ENCODE measurements at regions of chr10 and their contacts with region 1.

Region 1: DNA sequence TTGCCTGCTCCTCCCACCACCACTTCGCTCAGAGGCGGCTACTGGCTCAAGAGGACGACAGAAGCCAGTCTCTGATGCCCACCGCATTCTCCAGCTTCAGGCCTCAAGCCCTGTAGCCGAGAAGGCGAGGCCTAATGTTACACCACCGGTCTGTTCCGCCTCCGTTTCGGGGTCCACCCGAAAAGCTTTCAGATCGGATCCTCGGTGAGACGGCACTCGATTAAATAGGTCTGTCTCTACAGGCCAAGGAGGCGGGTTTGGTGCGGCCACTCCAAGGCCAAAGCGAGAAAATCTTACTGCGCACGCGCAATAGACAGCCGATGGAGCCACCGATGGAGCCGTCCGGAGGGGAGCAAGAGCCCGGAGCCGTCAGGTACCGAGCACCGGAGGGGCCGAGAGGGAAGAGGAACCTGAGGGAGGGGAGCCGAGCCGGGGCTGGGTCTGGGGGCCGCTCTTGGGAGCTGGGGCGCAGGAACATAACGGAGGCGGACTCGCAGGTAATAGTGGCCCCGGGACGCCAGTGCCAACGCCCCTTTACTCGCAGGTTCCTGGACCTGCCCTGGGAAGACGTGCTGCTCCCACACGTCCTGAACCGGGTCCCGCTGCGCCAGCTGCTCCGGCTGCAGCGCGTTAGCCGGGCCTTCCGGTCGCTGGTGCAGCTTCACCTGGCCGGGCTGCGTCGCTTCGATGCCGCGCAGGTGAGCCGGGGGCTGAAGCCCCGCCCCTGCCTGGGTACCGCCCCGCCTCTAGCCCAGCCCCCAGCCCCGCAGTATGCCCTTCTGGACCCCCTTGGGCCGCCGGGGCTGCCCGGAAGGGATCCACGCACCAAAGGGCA is at the start of gene FBXL15:
- DNase-seq: peak; percentile 96
- H3K4me3 Mint-ChIP-seq: peak within 1 kb of the TSS; percentile 99
- H3K27ac Mint-ChIP-seq: peak within 1 kb of the TSS; percentile 98
- H3K4me1 Mint-ChIP-seq: peaks cover 34% of the 10 kb centered on the region
- H3K27me3 Mint-ChIP-seq: peaks cover 9% of the 10 kb centered on the region
- total RNA-seq, gene FBXL15: 14.5 and 18.5 TPM in 2 replicates

Region 2: DNA sequence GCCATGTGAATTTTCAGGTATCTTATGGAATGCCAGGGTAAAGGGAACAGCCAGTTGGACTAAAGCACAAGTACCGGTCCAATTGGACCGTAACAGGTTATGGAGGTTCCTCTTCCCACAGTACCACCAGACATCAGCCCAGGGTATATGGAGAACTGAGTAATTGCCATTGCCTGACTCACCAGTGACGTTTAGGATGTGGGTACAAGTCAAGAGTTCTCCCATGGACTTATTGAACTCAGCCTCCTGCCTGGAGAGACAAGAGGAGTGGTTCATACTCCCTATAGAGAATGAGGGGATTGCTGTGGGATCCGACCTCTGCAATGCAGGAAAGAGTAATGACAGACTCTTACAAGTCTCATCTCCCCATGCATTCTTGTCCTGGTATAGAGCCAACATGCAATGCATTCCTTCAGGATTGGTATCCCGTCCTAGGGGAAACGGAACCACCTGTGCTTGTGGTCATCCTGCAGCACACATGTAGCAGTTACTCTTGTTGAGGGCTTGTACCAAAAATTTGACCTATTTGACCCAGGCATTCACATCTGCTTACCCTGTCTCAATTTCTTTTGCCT is 225.6 kb before region 1 on chr10:
- intact Hi-C with region 1: no loop called
- DNase-seq: no peak
- H3K4me3 Mint-ChIP-seq: no peak overlapping the region
- H3K27ac Mint-ChIP-seq: no peak overlapping the region
- H3K4me1 Mint-ChIP-seq: peaks cover 8% of the 10 kb centered on the region
- H3K27me3 Mint-ChIP-seq: no peaks in the 10 kb centered on the region

Region 3: GRCh38 chr10:102399217-102400089 is 21.6 kb before region 1 on chr10:
- intact Hi-C with region 1: loop called (anchors 1 kb)
- DNase-seq: peak; percentile 86
- H3K4me3 Mint-ChIP-seq: peak overlapping the region; percentile 90
- H3K27ac Mint-ChIP-seq: peak overlapping the region; percentile 63
- H3K4me1 Mint-ChIP-seq: peaks cover 42% of the 10 kb centered on the region
- H3K27me3 Mint-ChIP-seq: no peaks in the 10 kb centered on the region

Region 4: GRCh38 chr10:102432162-102432950 is 11.3 kb after region 1 on chr10 and contains the start of gene CUEDC2:
- intact Hi-C with region 1: loop called (anchors 1 kb)
- DNase-seq: peak; percentile 95
- H3K4me3 Mint-ChIP-seq: peak within 1 kb of the TSS; percentile 95
- H3K27ac Mint-ChIP-seq: peak within 1 kb of the TSS; percentile 94
- H3K4me1 Mint-ChIP-seq: peaks cover 55% of the 10 kb centered on the region
- H3K27me3 Mint-ChIP-seq: no peaks in the 10 kb centered on the region
- total RNA-seq, gene CUEDC2: 59.0 and 59.4 TPM in 2 replicates

Region 5: GRCh38 chr10:102461187-102462054 is 40.4 kb after region 1 on chr10:
- intact Hi-C with region 1: loop called (anchors 1 kb)
- DNase-seq: peak; percentile 91
- H3K4me3 Mint-ChIP-seq: peak overlapping the region; percentile 94
- H3K27ac Mint-ChIP-seq: peak overlapping the region; percentile 87
- H3K4me1 Mint-ChIP-seq: peaks cover 26% of the 10 kb centered on the region
- H3K27me3 Mint-ChIP-seq: peaks cover 1% of the 10 kb centered on the region

Measured in activated T-helper 1 cell treated with anti-CD3 and anti-CD28 coated beads, Interleukin-12 subunit alpha, Interleukin-12 subunit beta, Interleukin-2, Interleukin-4 antibody, amounts not matched to agents 30 ng/mL and 10 ng/mL and 1 ng/mL, durations not matched to agents 14 hours and 24 hours and 36 hours (primary cell).